ENCODE measurements at regions of chr9 and their contacts with region 1.

Region 1: DNA sequence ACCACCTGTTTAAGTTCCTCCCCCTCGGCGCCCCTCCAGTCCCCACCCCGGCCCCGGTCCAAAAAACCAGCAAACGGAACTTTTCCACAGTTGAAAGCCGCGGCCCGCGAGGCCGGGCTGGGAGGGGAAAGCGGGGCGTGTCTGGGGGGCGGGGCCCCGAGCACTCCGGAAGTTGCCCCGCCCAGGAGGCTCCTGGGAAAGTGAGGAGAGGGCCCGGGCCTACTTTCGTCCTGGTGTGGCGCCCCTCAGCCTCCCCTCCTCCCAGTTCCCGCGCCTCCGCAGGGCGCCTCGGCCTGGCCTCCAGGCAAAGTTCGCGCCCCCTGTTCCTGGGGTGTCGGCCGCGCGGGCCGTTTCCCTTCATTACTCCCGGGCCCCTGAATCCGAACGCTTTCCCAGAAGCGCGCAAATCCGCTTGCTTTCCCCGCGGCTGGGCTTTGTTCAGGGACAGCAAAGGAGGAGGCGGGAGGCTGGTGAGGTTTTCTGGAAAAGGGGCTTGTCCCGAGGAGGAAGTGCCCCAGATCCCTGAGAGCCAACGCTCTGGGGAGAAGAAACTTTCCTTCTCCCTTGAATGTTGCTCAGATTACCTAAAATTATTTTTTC is 4.5 kb upstream of the DMRT3 start:
- DNase-seq: peak; percentile 30
- H3K4me3 Mint-ChIP-seq: peak overlapping the region; percentile 42
- H3K27ac Mint-ChIP-seq: no peak overlapping the region
- H3K4me1 Mint-ChIP-seq: peaks cover 37% of the 10 kb centered on the region
- H3K27me3 Mint-ChIP-seq: peaks cover 75% of the 10 kb centered on the region

Region 2: DNA sequence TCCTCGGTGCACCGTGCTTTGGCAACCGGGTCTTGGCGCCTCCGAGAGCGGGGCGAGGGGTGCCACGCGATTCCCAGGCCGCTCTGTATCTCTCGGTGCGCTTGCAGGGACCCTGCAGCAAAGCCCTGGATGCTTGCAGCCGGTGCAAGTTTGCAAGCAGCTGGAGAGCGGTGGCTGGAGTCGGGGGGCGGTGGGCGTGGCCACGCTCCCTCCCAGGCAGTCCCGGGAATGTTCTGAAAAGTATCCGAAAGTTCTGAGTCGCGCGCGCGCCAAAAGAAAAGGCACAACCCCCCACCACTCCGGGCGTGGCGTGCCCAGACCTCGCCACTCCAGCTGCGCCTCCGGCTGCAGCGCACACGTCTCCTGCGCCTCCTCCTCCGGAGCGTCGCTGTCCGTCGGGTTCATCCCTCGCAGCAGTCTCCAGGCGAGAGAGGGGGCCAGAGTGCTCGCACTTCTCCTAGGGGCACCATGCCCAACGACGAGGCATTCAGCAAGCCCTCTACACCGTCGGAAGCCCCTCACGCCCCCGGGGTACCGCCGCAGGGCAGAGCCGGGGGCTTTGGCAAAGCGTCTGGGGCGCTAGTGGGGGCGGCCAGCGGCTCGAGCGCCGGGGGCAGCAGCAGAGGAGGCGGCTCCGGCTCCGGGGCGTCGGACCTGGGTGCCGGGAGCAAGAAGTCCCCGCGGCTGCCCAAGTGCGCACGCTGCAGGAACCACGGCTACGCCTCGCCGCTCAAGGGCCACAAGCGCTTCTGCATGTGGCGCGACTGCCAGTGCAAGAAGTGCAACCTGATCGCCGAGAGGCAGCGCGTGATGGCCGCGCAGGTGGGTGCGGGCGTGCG is 130.4 kb before region 1 on chr9 and contains the start of gene DMRT1:
- CTCF ChIA-PET with region 1: no interaction called
- intact Hi-C with region 1: loop called (anchors 5 kb)
- DNase-seq: no peak
- H3K4me3 Mint-ChIP-seq: no peak within 1 kb of the TSS
- H3K27ac Mint-ChIP-seq: no peak within 1 kb of the TSS
- H3K4me1 Mint-ChIP-seq: peaks cover 21% of the 10 kb centered on the region
- H3K27me3 Mint-ChIP-seq: peaks cover 43% of the 10 kb centered on the region
- total RNA-seq, gene DMRT1: not detected

Region 3: DNA sequence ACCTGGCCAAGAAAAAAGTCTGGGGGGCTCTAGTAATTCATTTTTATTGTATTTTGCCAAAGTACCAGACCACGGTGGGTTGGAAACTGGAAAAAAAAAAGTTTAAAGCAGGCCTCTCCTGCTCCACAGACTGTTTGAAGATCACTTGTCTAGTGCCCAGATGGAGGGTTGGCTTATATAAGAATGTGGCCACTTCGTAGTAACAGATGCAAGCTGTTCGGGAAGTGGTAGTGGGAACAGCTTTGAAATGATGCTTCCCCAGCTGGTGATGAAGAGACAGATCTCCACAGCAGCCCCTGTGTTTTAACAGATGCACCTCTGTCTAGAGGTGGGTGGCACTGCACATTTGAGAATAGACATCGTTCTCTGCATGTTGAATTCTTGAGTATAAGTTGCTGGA is 49.8 kb before region 1 on chr9:
- CTCF ChIA-PET with region 1: no interaction called
- intact Hi-C with region 1: no loop called
- DNase-seq: no peak
- H3K4me3 Mint-ChIP-seq: no peak overlapping the region
- H3K27ac Mint-ChIP-seq: no peak overlapping the region
- H3K4me1 Mint-ChIP-seq: no peaks in the 10 kb centered on the region
- H3K27me3 Mint-ChIP-seq: no peaks in the 10 kb centered on the region

Region 4: GRCh38 chr9:1050116-1050800 is 78.3 kb after region 1 on chr9 and contains the start of gene DMRT2:
- CTCF ChIA-PET with region 1: no interaction called
- intact Hi-C with region 1: loop called (anchors 1 kb)
- DNase-seq: peak; percentile 60
- H3K4me3 Mint-ChIP-seq: peak within 1 kb of the TSS; percentile 53
- H3K27ac Mint-ChIP-seq: no peak within 1 kb of the TSS
- H3K4me1 Mint-ChIP-seq: peaks cover 60% of the 10 kb centered on the region
- H3K27me3 Mint-ChIP-seq: peaks cover 91% of the 10 kb centered on the region
- total RNA-seq, gene DMRT2: not detected